ENCODE measurements at regions of chr3 and their contacts with region 1.

Region 1: GRCh38 chr3:39414421-39414907 is 7.9 kb downstream of the RPSA start:
- DNase-seq: no peak
- ATAC-seq: no peak

Region 2: GRCh38 chr3:39569095-39569494 is 154.6 kb after region 1 on chr3:
- intact Hi-C with region 1: no loop called
- DNase-seq: no peak
- ATAC-seq: no peak

Region 3: DNA sequence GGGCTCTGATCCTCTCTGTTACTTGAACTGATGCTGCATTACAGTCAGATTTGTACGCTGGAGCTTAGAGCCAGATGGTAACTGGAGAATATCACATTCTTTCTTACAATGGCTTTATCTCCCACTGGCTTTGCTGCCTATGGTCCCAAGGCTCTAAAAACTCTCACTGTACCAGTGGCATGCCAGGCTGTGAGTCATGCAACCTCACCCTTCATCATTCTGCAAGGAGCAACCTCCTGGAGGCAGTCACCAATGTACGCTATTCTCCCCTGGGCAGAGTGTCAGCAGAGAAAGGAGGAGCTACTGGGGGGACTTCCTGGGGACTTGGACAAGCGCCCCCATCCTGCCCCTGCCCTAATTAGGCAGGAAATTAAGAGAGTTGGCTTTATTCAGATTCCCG is 797.1 kb after region 1 on chr3:
- intact Hi-C with region 1: loop called (anchors 5 kb)
- DNase-seq: no peak
- ATAC-seq: no peak

Region 4: DNA sequence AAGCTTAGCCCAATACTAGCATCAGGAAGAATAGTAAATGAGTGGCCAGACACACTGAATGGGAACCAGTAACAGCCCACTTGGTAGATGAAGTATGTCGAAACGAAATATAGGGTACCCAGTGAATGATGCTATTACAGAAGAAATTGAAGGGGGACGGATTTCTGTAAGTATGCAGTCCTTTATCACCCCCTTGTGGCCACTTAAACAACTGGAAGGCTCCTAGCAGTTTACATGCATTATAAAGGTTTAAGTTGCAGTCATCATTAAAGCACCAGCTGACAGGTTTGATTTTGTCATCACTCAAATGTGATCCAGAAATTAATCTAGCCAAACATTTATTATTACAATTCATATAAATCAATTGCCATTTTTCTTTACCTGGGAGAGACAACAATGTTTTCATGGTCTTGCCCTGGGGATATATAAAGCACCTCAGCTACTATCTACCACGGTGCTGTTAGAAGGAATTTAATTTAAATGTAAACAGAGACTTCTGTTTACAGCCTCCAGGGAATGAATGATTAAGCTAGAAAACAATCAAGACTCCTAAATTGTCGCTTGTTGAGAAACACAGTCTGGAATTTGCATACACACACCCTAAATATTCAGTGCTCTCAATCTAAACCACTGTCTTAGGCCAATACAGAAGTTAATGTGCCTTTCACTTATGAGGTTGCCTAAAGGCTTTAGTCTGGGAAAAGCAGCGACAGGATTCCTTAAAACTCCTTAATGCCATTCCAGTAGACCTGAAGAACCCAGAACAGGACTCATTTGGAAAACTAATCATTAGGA is 902.8 kb after region 1 on chr3:
- intact Hi-C with region 1: loop called (anchors 10 kb)
- DNase-seq: no peak
- ATAC-seq: peak; percentile 64

Measured in sciatic nerve (tissue), 2 donors.